A549 (cell line): ENCODE measurements at regions of chr3 and their contacts with region 1.

Region 1: DNA sequence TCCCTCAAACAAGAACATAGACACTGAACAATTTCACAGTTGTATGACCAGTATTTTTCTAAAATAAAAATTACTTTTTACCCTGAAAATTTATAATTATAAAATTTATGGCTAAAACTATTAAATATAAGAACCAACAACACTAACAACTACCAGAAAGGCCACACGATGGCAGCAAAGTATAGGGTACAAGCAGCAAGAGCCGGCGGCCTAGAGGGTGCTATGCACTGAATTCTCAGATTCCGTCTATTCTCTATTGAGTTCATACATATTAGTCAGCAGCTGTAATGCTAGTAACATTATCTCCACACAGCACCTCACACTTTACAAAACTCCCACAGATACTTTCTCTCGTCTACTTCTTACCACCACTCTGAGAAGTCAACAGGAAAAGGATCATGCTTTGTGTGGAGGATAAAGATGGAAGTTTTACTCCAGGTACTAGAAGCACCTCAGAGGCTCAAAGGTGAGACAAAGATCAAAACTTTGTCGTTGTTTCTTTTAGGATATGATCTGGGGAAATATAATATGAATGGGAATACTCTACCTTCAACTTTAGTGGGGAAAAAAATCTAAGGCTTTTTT is 160.5 kb downstream of the FGF12 start:
- DNase-seq: peak; percentile 13 to 71
- ATAC-seq: peak; percentile 75 to 90
- H3K4me3 ChIP-seq: no peak overlapping the region
- H3K27ac ChIP-seq: no peak overlapping the region
- H3K4me1 ChIP-seq: 0 out of 3 replicates have a peak, but pooled peaks cover 4% of the 10 kb centered on the region
- CTCF ChIP-seq: peak; percentile 81
- EP300 ChIP-seq: no peak
- POLR2A ChIP-seq: no peak
- RAD21 ChIP-seq: peak; percentile 85 to 89

Region 2: GRCh38 chr3:192802957-192803899 is 236.4 kb after region 1 on chr3:
- CTCF ChIA-PET with region 1: interaction called, 21 read pairs
- POLR2A ChIA-PET with region 1: no interaction called
- DNase-seq: peak; percentile 46 to 50
- ATAC-seq: peak; percentile 62 to 79; a peak in 4 of 6 replicates
- H3K4me3 ChIP-seq: no peak overlapping the region
- H3K27ac ChIP-seq: no peak overlapping the region
- H3K4me1 ChIP-seq: no peaks in the 10 kb centered on the region
- CTCF ChIP-seq: peak; percentile 52
- EP300 ChIP-seq: no peak
- POLR2A ChIP-seq: no peak
- RAD21 ChIP-seq: peak; percentile 33 to 43; a peak in 2 of 5 replicates